ENCODE measurements at regions of chr11 and their contacts with region 1.

Region 1: DNA sequence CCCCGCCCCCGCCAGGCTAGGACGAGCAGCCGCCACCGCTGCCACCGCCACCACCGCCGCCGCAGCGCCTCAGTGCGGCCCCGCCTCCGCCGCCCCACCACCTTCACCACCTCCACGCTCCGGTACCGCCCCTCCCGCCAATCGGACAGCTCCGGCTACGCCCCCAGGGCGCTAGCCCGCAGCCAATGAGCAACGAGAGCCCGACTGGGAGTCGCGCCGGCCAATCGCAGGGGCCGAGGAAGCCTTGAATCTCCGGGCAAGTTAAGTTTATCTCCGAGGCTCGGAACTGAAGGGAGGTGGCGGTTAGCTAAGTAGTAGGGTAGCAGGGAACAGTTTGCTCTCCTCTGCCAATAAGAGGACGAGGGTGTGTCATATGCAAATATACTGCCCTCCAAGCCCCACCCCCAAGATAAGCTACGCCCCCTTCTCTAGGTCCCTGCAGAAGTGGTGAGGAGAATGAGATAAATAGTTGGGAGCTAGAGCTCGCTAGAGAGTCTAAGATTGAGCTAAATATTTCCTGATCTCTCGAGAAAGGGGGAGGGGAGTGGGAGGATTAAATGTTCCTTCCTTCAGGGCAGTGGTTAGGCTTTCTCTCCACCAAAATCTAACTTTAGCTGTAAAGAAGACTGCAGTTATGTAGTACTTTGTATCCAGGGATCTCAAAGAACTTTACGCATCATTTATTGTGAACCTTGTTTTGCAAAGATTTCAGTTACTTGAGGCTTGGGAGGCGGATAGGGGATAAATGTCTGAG is at the start of gene SESN3:
- DNase-seq: peak; percentile 98
- H3K4me3 Mint-ChIP-seq: peak within 1 kb of the TSS; percentile 96
- H3K27ac Mint-ChIP-seq: peak within 1 kb of the TSS; percentile 88
- H3K4me1 Mint-ChIP-seq: peaks cover 18% of the 10 kb centered on the region
- H3K27me3 Mint-ChIP-seq: peaks cover 2% of the 10 kb centered on the region
- total RNA-seq, gene SESN3: 62.0 and 68.6 TPM in 2 replicates

Region 2: GRCh38 chr11:94988748-94989147 is 242.6 kb before region 1 on chr11:
- intact Hi-C with region 1: no loop called
- DNase-seq: no peak
- H3K4me3 Mint-ChIP-seq: no peak overlapping the region
- H3K27ac Mint-ChIP-seq: no peak overlapping the region
- H3K4me1 Mint-ChIP-seq: no peaks in the 10 kb centered on the region
- H3K27me3 Mint-ChIP-seq: peaks cover 12% of the 10 kb centered on the region

Region 3: DNA sequence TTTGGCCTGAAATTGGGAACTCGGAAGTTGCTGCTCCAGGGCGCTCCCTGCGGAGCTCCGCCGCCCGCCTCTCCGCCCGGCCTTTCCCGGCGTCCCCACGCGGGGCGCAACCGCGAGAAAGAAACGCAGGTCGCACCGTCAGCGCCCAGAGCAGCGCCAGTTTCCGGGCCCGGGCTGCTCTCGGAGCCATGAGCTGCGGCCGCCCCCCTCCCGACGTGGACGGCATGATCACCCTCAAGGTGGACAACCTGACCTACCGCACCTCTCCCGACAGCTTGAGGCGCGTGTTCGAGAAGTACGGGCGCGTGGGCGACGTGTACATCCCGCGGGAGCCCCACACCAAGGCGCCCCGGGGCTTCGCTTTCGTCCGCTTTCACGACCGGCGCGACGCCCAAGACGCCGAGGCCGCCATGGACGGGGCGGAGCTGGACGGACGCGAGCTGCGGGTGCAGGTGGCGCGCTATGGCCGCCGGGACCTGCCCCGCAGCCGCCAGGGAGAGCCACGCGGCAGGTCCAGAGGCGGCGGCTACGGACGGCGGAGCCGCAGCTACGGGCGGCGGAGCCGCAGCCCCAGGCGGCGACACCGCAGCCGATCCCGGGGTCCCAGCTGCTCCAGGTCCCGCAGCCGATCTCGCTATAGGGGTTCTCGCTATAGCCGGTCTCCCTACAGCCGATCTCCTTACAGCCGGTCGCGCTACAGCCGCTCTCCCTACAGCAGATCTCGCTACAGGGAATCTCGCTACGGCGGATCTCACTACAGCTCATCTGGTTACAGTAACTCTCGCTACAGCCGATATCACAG is 164.1 kb before region 1 on chr11:
- intact Hi-C with region 1: loop called (anchors 1 kb)
- DNase-seq: peak; percentile 72
- H3K4me3 Mint-ChIP-seq: peak overlapping the region; percentile 95
- H3K27ac Mint-ChIP-seq: peak overlapping the region; percentile 96
- H3K4me1 Mint-ChIP-seq: peaks cover 28% of the 10 kb centered on the region
- H3K27me3 Mint-ChIP-seq: peaks cover 23% of the 10 kb centered on the region

Region 4: GRCh38 chr11:95254131-95254704 is 22.9 kb after region 1 on chr11:
- intact Hi-C with region 1: loop called (anchors 1 kb)
- DNase-seq: peak; percentile 78
- H3K4me3 Mint-ChIP-seq: peak overlapping the region; percentile 81
- H3K27ac Mint-ChIP-seq: peak overlapping the region; percentile 80
- H3K4me1 Mint-ChIP-seq: peaks cover 43% of the 10 kb centered on the region
- H3K27me3 Mint-ChIP-seq: peaks cover 1% of the 10 kb centered on the region

Region 5: DNA sequence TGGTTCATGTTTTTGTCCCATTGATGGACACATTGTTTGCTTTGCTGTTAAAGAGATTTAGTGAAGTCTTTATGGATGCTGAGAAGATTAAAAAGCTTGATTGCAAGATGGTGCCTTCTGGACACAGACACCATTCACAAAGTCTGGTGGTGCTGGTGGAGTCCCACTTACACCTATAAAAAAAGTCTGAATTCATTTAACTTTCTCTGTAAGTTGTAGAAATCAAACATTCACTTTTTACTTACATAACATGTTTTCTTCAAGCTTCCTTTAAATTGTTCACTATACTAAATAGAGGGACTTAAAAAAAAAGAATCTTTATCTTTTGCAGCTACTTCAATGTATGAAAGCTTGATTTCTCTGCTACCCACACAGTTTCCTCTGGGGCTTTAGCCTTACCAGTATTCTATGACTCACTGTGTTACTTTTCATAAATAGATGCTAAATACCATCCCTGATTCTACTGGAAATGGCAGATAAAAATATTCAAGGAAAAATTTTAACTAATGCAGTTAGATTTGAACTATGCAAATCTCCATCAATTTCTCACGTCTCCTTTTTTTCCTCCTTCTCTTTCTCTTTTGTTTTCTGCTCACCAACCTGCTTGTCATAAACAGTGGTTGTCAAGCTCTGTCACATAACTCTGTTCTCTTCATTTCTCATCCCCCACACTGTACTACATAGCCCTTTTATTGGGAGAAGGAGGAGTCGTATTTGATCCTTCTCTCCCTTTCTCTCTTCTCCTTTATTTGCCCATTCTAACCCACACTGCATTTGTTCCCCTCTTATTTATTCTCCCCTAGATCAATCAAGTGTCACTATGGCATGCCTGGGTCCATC is 468.5 kb after region 1 on chr11:
- intact Hi-C with region 1: loop called (anchors 1 kb)
- DNase-seq: no peak
- H3K4me3 Mint-ChIP-seq: peak overlapping the region; percentile 73
- H3K27ac Mint-ChIP-seq: peak overlapping the region; percentile 95
- H3K4me1 Mint-ChIP-seq: peaks cover 68% of the 10 kb centered on the region
- H3K27me3 Mint-ChIP-seq: no peaks in the 10 kb centered on the region

Region 6: DNA sequence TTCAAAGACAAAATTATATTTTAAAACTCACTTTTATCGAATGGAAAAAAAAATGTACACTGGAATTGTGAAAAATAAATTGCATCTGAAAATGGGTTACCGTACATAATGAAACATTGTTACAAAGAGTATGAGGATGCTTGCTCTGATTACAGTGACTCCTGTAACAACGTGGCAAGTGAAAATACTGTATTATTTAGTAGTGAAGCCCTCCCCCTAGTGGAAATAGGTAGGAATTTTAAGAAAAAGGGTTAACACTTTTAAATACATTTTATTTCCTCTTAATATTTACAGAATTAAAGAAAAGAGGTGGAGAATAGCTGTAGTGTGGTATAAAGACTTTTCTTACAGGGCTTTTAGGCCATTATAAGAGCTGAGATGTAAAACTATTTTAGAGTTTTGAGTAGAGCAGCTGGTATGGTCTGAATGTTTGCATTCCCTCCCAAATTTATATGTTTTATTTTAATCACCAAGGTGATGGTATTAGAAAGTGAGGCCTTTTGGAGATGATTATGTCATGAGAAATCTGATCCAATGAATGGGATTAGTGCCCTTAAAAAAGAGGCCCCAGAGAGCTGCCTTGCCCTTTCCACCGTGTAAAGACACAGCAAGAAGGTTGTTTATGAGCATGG is 533.1 kb after region 1 on chr11:
- intact Hi-C with region 1: loop called (anchors 2 kb)
- DNase-seq: no peak
- H3K4me3 Mint-ChIP-seq: no peak overlapping the region
- H3K27ac Mint-ChIP-seq: no peak overlapping the region
- H3K4me1 Mint-ChIP-seq: no peaks in the 10 kb centered on the region
- H3K27me3 Mint-ChIP-seq: no peaks in the 10 kb centered on the region